ENCODE measurements at regions of chr17 and their contacts with region 1.

Region 1: DNA sequence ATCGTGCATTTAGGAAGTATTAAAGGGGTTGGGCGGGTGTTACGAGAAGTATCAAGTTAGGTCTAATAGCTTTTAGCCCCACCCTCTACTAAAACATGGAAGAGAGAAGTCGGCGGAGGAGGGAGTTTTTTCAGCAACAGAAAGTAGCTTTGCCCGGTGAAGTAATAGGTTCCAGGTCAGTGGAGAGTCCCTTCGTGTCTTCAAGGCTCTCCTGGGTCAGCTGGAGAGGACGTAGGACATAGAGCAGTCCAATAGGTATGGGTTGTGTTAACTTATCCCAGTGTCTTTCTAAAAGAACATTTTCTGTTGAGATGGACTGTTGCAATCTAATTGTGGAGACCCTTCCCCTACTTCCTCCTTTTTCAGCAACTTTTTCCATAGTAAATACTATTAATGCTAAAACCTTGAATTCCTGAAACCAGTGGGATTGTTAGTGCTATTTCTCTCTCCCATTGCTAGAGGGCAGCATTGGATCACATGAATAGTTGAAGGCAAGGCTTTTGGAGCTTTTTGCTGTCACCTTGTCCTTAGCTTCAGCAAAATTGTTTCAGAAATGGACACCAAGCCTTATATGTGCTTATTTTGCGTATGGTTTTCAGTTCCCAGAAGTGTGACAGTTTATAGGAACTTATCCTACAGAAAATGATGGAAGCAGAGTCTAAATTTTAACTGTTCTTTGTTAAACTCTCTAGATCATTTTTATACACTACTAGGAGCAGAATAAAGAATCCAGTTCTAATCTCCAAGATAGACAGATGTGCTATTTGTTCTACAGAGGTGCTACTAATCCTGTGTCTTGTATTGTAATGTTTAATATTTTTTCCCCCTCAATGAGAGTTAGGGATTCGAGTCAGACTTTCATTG is 38.4 kb downstream of the UTP18 start:
- DNase-seq: peak in 4 of 5 donors; percentile 12 to 16 (median 13)
- H3K4me3 ChIP-seq: no peak overlapping the region
- H3K4me3 Mint-ChIP-seq: no peak overlapping the region
- H3K27ac ChIP-seq: no peak overlapping the region
- H3K27ac Mint-ChIP-seq: no peak overlapping the region
- H3K4me1 ChIP-seq: no peaks in the 10 kb centered on the region
- H3K4me1 Mint-ChIP-seq: peaks cover 0 to 7% (median 0%) of the 10 kb centered on the region in 4 donors
- H3K27me3 ChIP-seq: no peaks in the 10 kb centered on the region
- H3K27me3 Mint-ChIP-seq: no peaks in the 10 kb centered on the region

Region 2: DNA sequence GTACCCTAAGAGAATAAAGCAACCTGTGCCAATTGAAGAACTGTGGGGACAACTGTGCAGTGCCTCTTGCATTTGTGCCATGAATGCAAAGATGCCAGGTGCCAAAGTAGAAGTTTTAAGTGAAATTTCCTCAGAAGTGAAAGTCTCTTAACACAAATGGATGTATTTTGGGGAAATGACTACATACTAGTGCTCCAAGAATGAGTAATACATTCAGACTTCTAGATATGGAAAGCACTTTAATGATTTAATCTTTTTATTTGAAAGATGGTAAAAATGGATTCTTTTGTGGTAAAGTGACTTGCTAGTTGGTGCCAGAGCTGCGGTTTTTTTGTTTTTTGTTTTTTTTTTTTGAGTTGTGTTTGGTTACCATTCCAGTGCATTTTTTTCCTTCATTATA is 23.4 kb before region 1 on chr17:
- CTCF ChIA-PET with region 1: no interaction called
- POLR2A ChIA-PET with region 1: no interaction called
- intact Hi-C with region 1: no loop called
- DNase-seq: no peak
- H3K4me3 ChIP-seq: no peak overlapping the region
- H3K4me3 Mint-ChIP-seq: no peak overlapping the region
- H3K27ac ChIP-seq: no peak overlapping the region
- H3K27ac Mint-ChIP-seq: no peak overlapping the region
- H3K4me1 ChIP-seq: peaks cover 5% of the 10 kb centered on the region
- H3K4me1 Mint-ChIP-seq: peaks cover 16 to 32% (median 26%) of the 10 kb centered on the region in 4 donors
- H3K27me3 ChIP-seq: no peaks in the 10 kb centered on the region
- H3K27me3 Mint-ChIP-seq: no peaks in the 10 kb centered on the region

Region 3: DNA sequence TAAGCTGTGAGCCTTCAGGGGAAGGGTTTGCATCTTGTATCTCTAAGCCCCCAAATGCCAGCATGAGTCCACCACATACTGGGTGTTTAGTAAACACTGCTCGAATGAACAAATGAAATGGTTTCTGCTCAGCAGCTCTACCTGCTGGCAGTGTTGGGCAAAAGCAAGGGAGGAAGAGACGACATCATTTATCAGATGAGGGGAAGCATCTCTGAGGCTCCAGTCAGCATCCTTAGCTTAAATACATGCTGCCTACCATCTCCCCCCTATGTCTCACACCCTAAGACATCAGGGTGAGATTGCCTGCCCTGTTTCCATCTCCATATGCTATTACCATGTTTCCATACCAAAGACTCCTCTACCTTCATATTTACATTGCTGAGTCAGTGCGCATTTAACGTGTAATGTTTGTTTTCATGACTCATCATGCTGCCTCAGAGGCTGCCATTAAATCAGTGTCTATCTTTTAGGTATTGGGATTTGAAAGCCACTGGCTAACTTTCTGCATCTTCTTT is 341.4 kb after region 1 on chr17:
- CTCF ChIA-PET with region 1: interaction called, 3 read pairs
- POLR2A ChIA-PET with region 1: no interaction called
- intact Hi-C with region 1: loop called (anchors 2 kb)
- DNase-seq: peak in 2 of 5 donors; percentile 1 to 5
- H3K4me3 ChIP-seq: no peak overlapping the region
- H3K4me3 Mint-ChIP-seq: no peak overlapping the region
- H3K27ac ChIP-seq: no peak overlapping the region
- H3K27ac Mint-ChIP-seq: no peak overlapping the region
- H3K4me1 ChIP-seq: no peaks in the 10 kb centered on the region
- H3K4me1 Mint-ChIP-seq: no peaks in the 10 kb centered on the region
- H3K27me3 ChIP-seq: no peaks in the 10 kb centered on the region
- H3K27me3 Mint-ChIP-seq: peaks cover 11 to 24% of the 10 kb centered on the region in 2 donors

Measured in CD4-positive, alpha-beta memory T cell (primary cell).